A673 (cell line): ENCODE measurements at regions of chr16 and their contacts with region 1.

Region 1: GRCh38 chr16:11379420-11379819 is 34.2 kb downstream of the RMI2 start:
- DNase-seq: no peak
- H3K4me3 ChIP-seq: no peak overlapping the region
- H3K27ac ChIP-seq: no peak overlapping the region
- H3K4me1 ChIP-seq: no peaks in the 10 kb centered on the region
- H3K27me3 ChIP-seq: no peaks in the 10 kb centered on the region
- CTCF ChIP-seq: no peak

Region 2: GRCh38 chr16:11076259-11077018 is 303.0 kb before region 1 on chr16:
- CTCF ChIA-PET with region 1: no interaction called
- POLR2A ChIA-PET with region 1: no interaction called
- intact Hi-C with region 1: no loop called
- DNase-seq: peak; percentile 14
- H3K4me3 ChIP-seq: no peak overlapping the region
- H3K27ac ChIP-seq: no peak overlapping the region
- H3K4me1 ChIP-seq: peaks cover 21% of the 10 kb centered on the region
- H3K27me3 ChIP-seq: no peaks in the 10 kb centered on the region
- CTCF ChIP-seq: no peak

Region 3: DNA sequence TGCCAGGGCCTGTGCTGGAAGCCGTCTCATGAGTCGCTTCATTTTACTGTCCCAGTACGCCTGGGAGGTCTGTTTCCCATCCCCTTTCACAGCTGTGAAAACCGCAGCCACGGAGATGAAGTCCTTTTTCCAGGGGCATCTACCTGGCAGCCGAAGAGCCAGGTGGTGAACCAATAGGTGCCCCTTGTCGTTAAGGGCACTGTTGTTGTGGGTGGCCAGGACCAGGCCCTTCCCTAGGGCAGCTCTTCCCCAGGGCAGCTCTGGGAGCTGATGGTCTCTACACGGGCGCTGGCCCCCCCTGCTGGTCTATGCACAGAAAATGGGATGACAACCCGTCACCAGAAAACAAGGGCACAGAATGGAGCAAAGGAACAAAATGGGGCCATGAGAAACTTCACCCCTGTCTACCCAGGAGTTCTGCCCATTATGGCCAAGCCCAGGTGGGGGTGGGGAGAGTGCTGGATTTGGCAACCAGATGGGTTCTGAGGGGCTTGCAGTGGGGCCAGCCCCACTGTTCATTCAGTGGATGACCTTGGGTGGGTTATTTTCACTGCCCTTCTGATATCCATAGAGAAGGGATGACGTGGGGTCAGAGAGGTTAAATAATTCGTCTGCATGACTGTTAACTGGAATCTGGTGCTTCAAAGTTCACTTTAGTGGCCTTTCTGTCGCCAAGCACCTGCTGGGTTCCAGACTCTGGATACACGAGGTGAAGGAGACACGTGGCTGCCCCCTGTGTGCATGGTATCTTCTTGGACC is 22.7 kb before region 1 on chr16:
- CTCF ChIA-PET with region 1: interaction called, 12 read pairs
- POLR2A ChIA-PET with region 1: no interaction called
- intact Hi-C with region 1: no loop called
- DNase-seq: peak; percentile 82
- H3K4me3 ChIP-seq: no peak overlapping the region
- H3K27ac ChIP-seq: no peak overlapping the region
- H3K4me1 ChIP-seq: peaks cover 29% of the 10 kb centered on the region
- H3K27me3 ChIP-seq: no peaks in the 10 kb centered on the region
- CTCF ChIP-seq: peak; percentile 87

Region 4: GRCh38 chr16:11396241-11397048 is 17.0 kb after region 1 on chr16:
- CTCF ChIA-PET with region 1: interaction called, 16 read pairs
- POLR2A ChIA-PET with region 1: interaction called, 5 read pairs
- intact Hi-C with region 1: no loop called
- DNase-seq: peak; percentile 68
- H3K4me3 ChIP-seq: no peak overlapping the region
- H3K27ac ChIP-seq: no peak overlapping the region
- H3K4me1 ChIP-seq: no peaks in the 10 kb centered on the region
- H3K27me3 ChIP-seq: no peaks in the 10 kb centered on the region
- CTCF ChIP-seq: peak; percentile 95